Activated naive CD4-positive, alpha-beta T cell treated with anti-CD3 and anti-CD28 coated beads, Interleukin-2, amount 10 ng/mL, durations not matched to agents 7 days and 5 days (primary cell): ENCODE measurements at regions of chr6 and their contacts with region 1.

Region 1: DNA sequence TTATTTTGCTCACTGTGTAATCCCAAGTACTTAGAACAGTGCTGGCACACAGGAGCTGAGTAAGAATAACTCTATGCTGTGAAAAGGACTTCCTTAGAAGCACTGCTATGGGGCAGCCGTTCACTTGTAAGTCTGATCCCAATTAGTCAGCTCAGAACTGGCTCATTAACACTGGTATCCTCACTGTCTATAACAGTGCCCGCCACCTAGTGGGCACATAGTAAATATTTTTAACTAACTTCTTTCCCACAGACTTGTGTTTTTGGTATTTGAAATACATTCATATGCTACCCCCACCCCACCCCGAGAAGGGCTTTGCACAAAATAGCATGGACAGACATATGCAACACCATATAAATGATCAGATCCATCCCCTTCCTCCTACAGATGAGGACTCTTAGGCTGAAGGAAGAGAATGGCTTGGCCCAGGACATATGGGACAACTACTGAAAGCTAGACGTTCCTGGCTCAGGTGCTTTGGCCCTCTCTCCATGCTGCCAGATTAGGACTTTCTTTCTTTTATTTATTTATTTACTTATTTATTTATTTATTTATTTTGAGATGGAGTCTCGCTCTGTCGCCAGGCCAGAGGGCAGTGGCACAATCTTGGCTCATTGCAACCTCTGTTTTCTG is 47.1 kb downstream of the DST start:
- DNase-seq: peak; percentile 53
- H3K4me3 Mint-ChIP-seq: no peak overlapping the region
- H3K27ac Mint-ChIP-seq: no peak overlapping the region
- H3K4me1 Mint-ChIP-seq: peaks cover 25% of the 10 kb centered on the region
- H3K27me3 Mint-ChIP-seq: peaks cover 6% of the 10 kb centered on the region

Region 2: GRCh38 chr6:56359201-56359899 is 236.3 kb before region 1 on chr6:
- CTCF ChIA-PET with region 1: interaction called, 27 read pairs
- DNase-seq: peak; percentile 72
- H3K4me3 Mint-ChIP-seq: no peak overlapping the region
- H3K27ac Mint-ChIP-seq: no peak overlapping the region
- H3K4me1 Mint-ChIP-seq: no peaks in the 10 kb centered on the region
- H3K27me3 Mint-ChIP-seq: peaks cover 5% of the 10 kb centered on the region

Region 3: GRCh38 chr6:56507517-56507916 is 88.1 kb before region 1 on chr6:
- CTCF ChIA-PET with region 1: no interaction called
- DNase-seq: no peak
- H3K4me3 Mint-ChIP-seq: no peak overlapping the region
- H3K27ac Mint-ChIP-seq: no peak overlapping the region
- H3K4me1 Mint-ChIP-seq: no peaks in the 10 kb centered on the region
- H3K27me3 Mint-ChIP-seq: no peaks in the 10 kb centered on the region

Region 4: GRCh38 chr6:56570413-56571359 is 24.9 kb before region 1 on chr6:
- CTCF ChIA-PET with region 1: interaction called, 18 read pairs
- DNase-seq: no peak
- H3K4me3 Mint-ChIP-seq: no peak overlapping the region
- H3K27ac Mint-ChIP-seq: no peak overlapping the region
- H3K4me1 Mint-ChIP-seq: no peaks in the 10 kb centered on the region
- H3K27me3 Mint-ChIP-seq: peaks cover 2% of the 10 kb centered on the region

Region 5: DNA sequence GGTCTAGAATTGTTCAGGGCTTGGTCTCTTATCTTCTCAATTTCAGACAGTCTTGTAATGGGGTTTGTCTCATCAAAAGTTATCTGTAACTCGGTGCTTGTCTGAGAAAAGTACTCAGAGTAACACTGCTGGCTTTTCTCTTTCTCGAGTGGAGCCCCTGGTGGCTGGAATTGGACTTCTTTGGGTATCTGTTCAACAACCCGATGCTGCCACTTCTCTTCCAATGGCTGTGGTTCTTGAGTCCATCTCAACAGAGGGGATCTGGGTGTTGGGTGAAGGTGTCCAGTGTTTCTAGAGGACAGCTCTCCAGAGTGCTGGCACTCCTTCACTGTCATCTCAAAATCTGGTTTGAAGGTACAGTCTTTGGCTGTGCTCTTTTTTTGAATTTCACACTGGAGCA is 22.4 kb after region 1 on chr6:
- CTCF ChIA-PET with region 1: interaction called, 11 read pairs
- DNase-seq: no peak
- H3K4me3 Mint-ChIP-seq: no peak overlapping the region
- H3K27ac Mint-ChIP-seq: no peak overlapping the region
- H3K4me1 Mint-ChIP-seq: no peaks in the 10 kb centered on the region
- H3K27me3 Mint-ChIP-seq: no peaks in the 10 kb centered on the region